ENCODE measurements at regions of chr3 and their contacts with region 1.

Region 1: DNA sequence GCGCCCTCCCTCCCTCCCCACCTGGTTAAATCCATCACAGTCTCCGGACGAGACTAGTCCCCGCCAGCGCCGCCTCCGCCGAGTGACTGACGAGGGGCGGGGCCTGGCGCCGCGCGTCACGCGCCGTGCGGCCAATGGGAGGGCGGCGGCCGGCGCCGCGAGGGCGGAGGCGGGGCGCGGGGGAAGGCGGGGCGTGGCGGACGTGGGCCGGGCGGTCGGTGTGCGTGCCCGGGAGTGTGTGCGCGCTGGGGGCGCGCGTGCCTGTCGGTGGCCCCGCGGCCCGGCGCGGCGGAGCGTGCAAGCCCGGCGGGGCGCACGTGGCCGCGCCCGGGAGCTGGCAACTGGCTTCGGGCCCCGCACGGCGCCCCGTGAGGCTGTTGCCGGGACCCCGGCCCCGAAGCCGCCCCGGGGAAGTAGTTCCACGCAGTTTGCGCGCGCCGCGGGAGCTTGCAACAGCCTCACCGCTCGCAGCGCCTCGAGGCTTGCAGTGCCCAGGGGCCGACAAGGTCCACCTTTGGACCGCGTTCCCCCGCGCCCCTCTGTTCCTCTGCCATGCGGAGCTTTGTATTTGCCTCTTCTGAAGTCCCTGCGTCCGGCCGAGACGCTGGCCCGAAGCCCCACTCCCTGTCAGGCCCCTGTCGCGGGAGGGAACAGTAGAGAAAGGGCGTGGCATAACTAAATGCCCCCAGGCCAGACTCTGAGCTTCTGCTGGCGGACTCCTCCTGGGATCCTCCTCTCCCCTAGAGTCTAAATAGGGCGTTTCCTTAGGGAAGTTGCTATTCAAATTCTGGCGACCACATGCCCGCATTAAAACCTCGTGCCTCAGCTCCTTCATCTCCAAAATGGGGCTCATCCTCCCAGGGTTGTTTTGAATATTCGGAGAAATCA is 400.9 kb downstream of the SHQ1 start:
- DNase-seq: peak; percentile 96
- ATAC-seq: peak; percentile 98
- H3K4me3 ChIP-seq: peak overlapping the region in 4 of 5 experiments; percentile 71 to 81 (median 76)
- H3K4me3 Mint-ChIP-seq: peak overlapping the region; percentile 84
- H3K27ac ChIP-seq: peak overlapping the region in 1 of 2 donors; percentile 68
- H3K27ac Mint-ChIP-seq: peak overlapping the region; percentile 84
- H3K4me1 ChIP-seq: peaks cover 28 to 41% of the 10 kb centered on the region in 2 donors
- H3K4me1 Mint-ChIP-seq: peaks cover 36% of the 10 kb centered on the region
- H3K27me3 ChIP-seq: peaks cover 0 to 4% (median 0%) of the 10 kb centered on the region in 4 experiments
- H3K27me3 Mint-ChIP-seq: peaks cover 24% of the 10 kb centered on the region
- CTCF ChIP-seq: no peak

Region 2: GRCh38 chr3:71875461-71875947 is 571.8 kb before region 1 on chr3:
- CTCF ChIA-PET with region 1: interaction called, 3 read pairs
- POLR2A ChIA-PET with region 1: interaction called, 5 read pairs
- intact Hi-C with region 1: loop called (anchors 10 kb)
- DNase-seq: peak; percentile 88
- ATAC-seq: peak; percentile 99
- H3K4me3 ChIP-seq: no peak overlapping the region
- H3K4me3 Mint-ChIP-seq: no peak overlapping the region
- H3K27ac ChIP-seq: no peak overlapping the region
- H3K27ac Mint-ChIP-seq: no peak overlapping the region
- H3K4me1 ChIP-seq: peaks cover 5 to 10% of the 10 kb centered on the region in 2 donors
- H3K4me1 Mint-ChIP-seq: peaks cover 17% of the 10 kb centered on the region
- H3K27me3 ChIP-seq: peaks cover 0 to 30% (median 20%) of the 10 kb centered on the region in 4 experiments
- H3K27me3 Mint-ChIP-seq: peaks cover 42% of the 10 kb centered on the region
- CTCF ChIP-seq: peak; percentile 88

Region 3: GRCh38 chr3:72100601-72101187 is 346.6 kb before region 1 on chr3:
- CTCF ChIA-PET with region 1: no interaction called
- POLR2A ChIA-PET with region 1: no interaction called
- intact Hi-C with region 1: loop called (anchors 2 kb)
- DNase-seq: peak; percentile 97
- ATAC-seq: peak; percentile 60
- H3K4me3 ChIP-seq: peak overlapping the region; percentile 28 to 70 (median 49)
- H3K4me3 Mint-ChIP-seq: peak overlapping the region; percentile 62
- H3K27ac ChIP-seq: peak overlapping the region; percentile 70 to 78
- H3K27ac Mint-ChIP-seq: peak overlapping the region; percentile 85
- H3K4me1 ChIP-seq: peaks cover 60 to 69% of the 10 kb centered on the region in 2 donors
- H3K4me1 Mint-ChIP-seq: peaks cover 63% of the 10 kb centered on the region
- H3K27me3 ChIP-seq: peaks cover 0 to 12% (median 0%) of the 10 kb centered on the region in 4 experiments
- H3K27me3 Mint-ChIP-seq: peaks cover 9% of the 10 kb centered on the region
- CTCF ChIP-seq: no peak

Region 4: DNA sequence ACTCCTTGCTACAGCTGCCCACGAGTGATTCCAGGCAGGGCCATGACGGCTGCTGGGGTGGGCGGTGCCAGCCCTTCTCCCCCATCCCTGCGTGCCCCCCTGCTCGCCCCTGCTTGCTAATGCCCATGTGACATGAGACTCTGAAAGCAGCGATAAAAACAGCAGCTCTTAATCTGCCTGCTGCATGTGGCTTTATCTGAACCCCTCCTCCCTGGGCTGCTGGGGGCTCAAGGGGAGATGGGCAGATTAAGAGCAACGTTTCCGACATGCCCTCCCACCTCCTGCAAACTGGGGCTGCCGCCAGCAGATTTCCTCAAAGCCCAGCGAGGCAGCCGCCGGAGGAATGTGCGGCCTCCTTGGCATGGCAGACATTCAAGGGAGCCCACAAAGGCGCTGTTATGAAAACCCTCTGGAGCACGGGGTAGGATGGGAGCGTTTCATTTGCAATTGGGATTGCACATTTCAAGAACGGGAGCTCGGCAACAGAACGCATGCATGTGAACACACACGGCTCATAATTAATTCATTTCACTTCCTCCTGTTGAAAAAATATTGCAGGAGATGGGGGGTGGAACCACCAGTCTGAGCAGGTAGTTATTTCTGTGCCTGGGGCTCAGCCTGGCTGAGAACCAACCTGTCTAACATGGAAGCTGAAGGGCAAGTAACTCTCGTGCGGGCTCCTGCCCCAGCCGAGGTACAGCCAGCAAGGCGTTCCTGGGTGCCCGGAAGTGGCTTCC is 158.2 kb before region 1 on chr3:
- CTCF ChIA-PET with region 1: no interaction called
- POLR2A ChIA-PET with region 1: no interaction called
- intact Hi-C with region 1: no loop called
- DNase-seq: peak; percentile 73
- ATAC-seq: peak; percentile 69
- H3K4me3 ChIP-seq: peak overlapping the region; percentile 17 to 69 (median 52)
- H3K4me3 Mint-ChIP-seq: peak overlapping the region; percentile 87
- H3K27ac ChIP-seq: no peak overlapping the region
- H3K27ac Mint-ChIP-seq: peak overlapping the region; percentile 5
- H3K4me1 ChIP-seq: peaks cover 10 to 21% of the 10 kb centered on the region in 2 donors
- H3K4me1 Mint-ChIP-seq: peaks cover 24% of the 10 kb centered on the region
- H3K27me3 ChIP-seq: peaks cover 0 to 14% (median 2%) of the 10 kb centered on the region in 4 experiments
- H3K27me3 Mint-ChIP-seq: peaks cover 14% of the 10 kb centered on the region
- CTCF ChIP-seq: no peak

Region 5: DNA sequence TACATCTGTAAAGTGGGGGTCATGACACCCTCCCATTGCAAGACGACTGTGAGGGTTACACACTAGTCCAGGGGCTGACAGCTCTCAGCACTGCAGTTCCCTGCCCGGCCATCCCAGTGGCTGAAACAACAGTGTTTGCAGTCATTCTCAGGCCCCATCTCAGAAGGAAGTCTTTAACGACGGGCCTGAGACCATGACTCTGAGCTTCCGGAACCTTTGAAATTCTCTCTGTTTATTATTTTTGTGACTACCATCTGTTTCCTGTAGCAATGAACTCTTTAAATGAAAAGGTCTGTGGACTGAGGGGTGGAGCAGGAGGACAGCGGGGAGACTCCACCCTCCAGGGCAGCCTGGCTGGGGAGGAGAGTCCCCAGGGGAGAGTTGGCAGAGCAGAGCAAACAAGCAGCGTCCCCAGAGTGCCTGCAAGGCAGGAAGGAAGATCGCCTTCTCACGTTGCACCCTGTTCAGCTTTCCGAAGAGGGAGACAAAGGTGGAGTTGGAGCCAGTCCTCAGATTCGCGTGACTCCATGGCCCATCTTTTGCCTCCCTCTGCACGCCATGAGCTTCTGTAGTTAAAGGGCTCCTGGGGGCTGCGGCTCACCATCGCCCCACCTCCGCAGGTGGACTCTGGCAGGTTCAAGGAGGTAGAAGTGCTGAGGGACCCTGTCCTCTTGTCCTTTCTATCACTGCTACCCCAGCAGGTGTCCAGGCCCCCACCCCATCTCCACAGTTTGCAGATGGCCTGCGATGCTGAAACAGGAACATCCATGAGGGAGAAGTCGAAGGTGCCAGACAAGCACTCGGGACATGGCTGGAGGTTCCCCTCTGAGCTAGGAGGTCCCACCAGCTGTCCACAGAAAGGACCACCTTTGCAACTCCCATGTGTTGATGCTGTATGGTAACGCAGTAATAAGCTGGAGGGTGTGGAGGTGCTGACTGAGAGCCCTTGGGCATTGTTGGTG is 136.6 kb before region 1 on chr3:
- CTCF ChIA-PET with region 1: no interaction called
- POLR2A ChIA-PET with region 1: no interaction called
- intact Hi-C with region 1: loop called (anchors 1 kb)
- DNase-seq: peak; percentile 89
- ATAC-seq: peak; percentile 98
- H3K4me3 ChIP-seq: peak overlapping the region; percentile 7 to 53 (median 18)
- H3K4me3 Mint-ChIP-seq: peak overlapping the region; percentile 82
- H3K27ac ChIP-seq: peak overlapping the region; percentile 76 to 88
- H3K27ac Mint-ChIP-seq: peak overlapping the region; percentile 90
- H3K4me1 ChIP-seq: peaks cover 42 to 46% of the 10 kb centered on the region in 2 donors
- H3K4me1 Mint-ChIP-seq: peaks cover 55% of the 10 kb centered on the region
- H3K27me3 ChIP-seq: no peaks in the 10 kb centered on the region
- H3K27me3 Mint-ChIP-seq: no peaks in the 10 kb centered on the region
- CTCF ChIP-seq: no peak

Region 6: GRCh38 chr3:72756900-72757299 is 309.6 kb after region 1 on chr3:
- CTCF ChIA-PET with region 1: no interaction called
- POLR2A ChIA-PET with region 1: no interaction called
- intact Hi-C with region 1: loop called (anchors 10 kb)
- DNase-seq: peak; percentile 84
- ATAC-seq: peak; percentile 98
- H3K4me3 ChIP-seq: peak overlapping the region in 4 of 5 experiments; percentile 19 to 55 (median 32)
- H3K4me3 Mint-ChIP-seq: peak overlapping the region; percentile 61
- H3K27ac ChIP-seq: no peak overlapping the region
- H3K27ac Mint-ChIP-seq: peak overlapping the region; percentile 22
- H3K4me1 ChIP-seq: peaks cover 22 to 28% of the 10 kb centered on the region in 2 donors
- H3K4me1 Mint-ChIP-seq: peaks cover 28% of the 10 kb centered on the region
- H3K27me3 ChIP-seq: peaks cover 0 to 40% (median 21%) of the 10 kb centered on the region in 4 experiments
- H3K27me3 Mint-ChIP-seq: peaks cover 59% of the 10 kb centered on the region
- CTCF ChIP-seq: no peak

Region 7: DNA sequence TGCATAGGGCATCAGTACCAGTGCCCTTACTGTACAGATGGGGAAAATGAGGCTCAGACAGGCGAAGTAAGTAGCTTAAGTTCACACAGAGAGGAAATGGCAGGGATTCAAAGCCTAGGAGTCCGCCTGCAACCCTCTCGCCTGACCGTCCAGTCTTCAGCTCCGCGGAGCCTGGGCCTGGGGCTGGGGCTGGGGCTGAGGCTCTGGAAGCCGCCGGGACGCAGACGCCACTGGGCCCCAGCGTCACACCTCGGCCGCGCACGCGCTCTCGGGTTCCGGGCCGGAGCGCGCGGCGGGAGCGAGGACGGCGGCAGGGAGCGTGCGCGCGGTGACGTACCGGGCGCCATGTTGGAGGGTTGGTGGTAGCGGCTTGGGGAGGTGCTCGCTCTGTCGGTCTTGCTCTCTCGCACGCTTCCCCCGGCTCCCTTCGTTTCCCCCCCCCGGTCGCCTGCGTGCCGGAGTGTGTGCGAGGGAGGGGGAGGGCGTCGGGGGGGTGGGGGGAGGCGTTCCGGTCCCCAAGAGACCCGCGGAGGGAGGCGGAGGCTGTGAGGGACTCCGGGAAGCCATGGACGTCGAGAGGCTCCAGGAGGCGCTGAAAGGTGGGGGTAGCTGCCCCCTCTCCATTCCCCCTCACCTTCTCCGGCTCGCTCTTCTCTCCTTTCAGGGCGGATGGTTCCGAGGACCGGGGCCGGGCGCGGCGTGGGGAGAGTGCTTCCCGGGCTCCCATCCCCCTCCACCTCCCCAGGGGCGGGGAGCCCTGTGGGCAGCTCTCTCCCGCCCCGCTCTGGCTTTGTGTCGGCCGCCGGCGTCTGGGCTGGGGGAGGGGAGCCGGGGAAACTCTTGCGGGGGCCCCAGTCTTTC is 549.4 kb after region 1 on chr3 and contains the start of gene PPP4R2:
- CTCF ChIA-PET with region 1: no interaction called
- POLR2A ChIA-PET with region 1: no interaction called
- intact Hi-C with region 1: loop called (anchors 2 kb)
- DNase-seq: peak; percentile 94
- ATAC-seq: peak; percentile 86
- H3K4me3 ChIP-seq: peak within 1 kb of the TSS; percentile 84 to 96 (median 91)
- H3K4me3 Mint-ChIP-seq: peak within 1 kb of the TSS; percentile 90
- H3K27ac ChIP-seq: peak within 1 kb of the TSS; percentile 92
- H3K27ac Mint-ChIP-seq: peak within 1 kb of the TSS; percentile 84
- H3K4me1 ChIP-seq: peaks cover 30 to 33% of the 10 kb centered on the region in 2 donors
- H3K4me1 Mint-ChIP-seq: peaks cover 36% of the 10 kb centered on the region
- H3K27me3 ChIP-seq: no peaks in the 10 kb centered on the region
- H3K27me3 Mint-ChIP-seq: no peaks in the 10 kb centered on the region
- CTCF ChIP-seq: no peak
- total RNA-seq, gene PPP4R2: 57.5 and 64.3 TPM in 2 replicates

Measured in B cell (primary cell).